CD8-positive, alpha-beta T cell (primary cell): ENCODE measurements at regions of chr5 and their contacts with region 1.

Region 1: DNA sequence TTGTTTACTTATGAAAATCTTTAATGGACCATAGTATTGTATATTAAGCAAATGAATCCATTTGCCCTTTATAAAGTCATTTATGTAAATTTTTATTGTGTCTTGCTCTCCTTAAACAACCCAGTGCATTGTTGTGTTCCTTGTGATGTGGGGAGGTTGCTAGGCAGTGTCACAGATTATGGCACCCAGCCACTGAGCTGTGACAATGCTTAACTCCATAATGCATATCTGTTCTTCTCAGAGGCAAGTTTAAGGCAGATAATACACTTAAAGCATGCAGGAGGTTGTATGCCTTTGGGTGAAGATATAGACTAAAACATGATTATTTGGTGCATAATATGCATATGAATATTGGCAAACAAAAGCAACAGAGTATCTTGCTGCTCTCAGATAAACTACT is 269.6 kb upstream of the RIOK2 start:
- DNase-seq: no peak
- ATAC-seq: no peak
- H3K4me3 ChIP-seq: no peak overlapping the region
- H3K4me3 Mint-ChIP-seq: no peak overlapping the region
- H3K27ac ChIP-seq: no peak overlapping the region
- H3K27ac Mint-ChIP-seq: no peak overlapping the region
- H3K4me1 ChIP-seq: no peaks in the 10 kb centered on the region
- H3K4me1 Mint-ChIP-seq: no peaks in the 10 kb centered on the region
- H3K27me3 ChIP-seq: no peaks in the 10 kb centered on the region
- H3K27me3 Mint-ChIP-seq: peaks cover 1% of the 10 kb centered on the region
- CTCF ChIP-seq: no peak

Region 2: GRCh38 chr5:97494465-97494864 is 41.8 kb after region 1 on chr5:
- CTCF ChIA-PET with region 1: no interaction called
- POLR2A ChIA-PET with region 1: no interaction called
- intact Hi-C with region 1: loop called in 1 of 2 experiments (anchors 1 kb)
- DNase-seq: no peak
- ATAC-seq: no peak
- H3K4me3 ChIP-seq: no peak overlapping the region
- H3K4me3 Mint-ChIP-seq: no peak overlapping the region
- H3K27ac ChIP-seq: no peak overlapping the region
- H3K27ac Mint-ChIP-seq: no peak overlapping the region
- H3K4me1 ChIP-seq: no peaks in the 10 kb centered on the region
- H3K4me1 Mint-ChIP-seq: no peaks in the 10 kb centered on the region
- H3K27me3 ChIP-seq: no peaks in the 10 kb centered on the region
- H3K27me3 Mint-ChIP-seq: no peaks in the 10 kb centered on the region
- CTCF ChIP-seq: no peak